Activated CD4-positive, alpha-beta T cell treated with anti-CD3 and anti-CD28 coated beads for 36 hours (primary cell): ENCODE measurements at regions of chr10 and their contacts with region 1.

Region 1: GRCh38 chr10:133373104-133373624 is at the start of gene ECHS1:
- DNase-seq: peak; percentile 97
- ATAC-seq: peak; percentile 100
- H3K4me3 Mint-ChIP-seq: peak within 1 kb of the TSS; percentile 73
- H3K27ac Mint-ChIP-seq: peak within 1 kb of the TSS; percentile 79
- H3K4me1 Mint-ChIP-seq: peaks cover 11% of the 10 kb centered on the region
- H3K27me3 Mint-ChIP-seq: no peaks in the 10 kb centered on the region
- total RNA-seq, gene ECHS1: 42.0 to 56.7 TPM

Region 2: GRCh38 chr10:133276435-133277201 is 96.5 kb before region 1 on chr10 and contains the start of gene ADAM8:
- CTCF ChIA-PET with region 1: no interaction called
- POLR2A ChIA-PET with region 1: no interaction called
- intact Hi-C with region 1: loop called in 1 of 2 experiments (anchors 1 kb)
- DNase-seq: peak; percentile 86
- ATAC-seq: peak; percentile 55
- H3K4me3 Mint-ChIP-seq: peak within 1 kb of the TSS; percentile 92
- H3K27ac Mint-ChIP-seq: peak within 1 kb of the TSS; percentile 90
- H3K4me1 Mint-ChIP-seq: peaks cover 19% of the 10 kb centered on the region
- H3K27me3 Mint-ChIP-seq: no peaks in the 10 kb centered on the region
- total RNA-seq, gene ADAM8: 124 to 176 TPM

Region 3: GRCh38 chr10:133335246-133336117 is 37.7 kb before region 1 on chr10:
- CTCF ChIA-PET with region 1: no interaction called
- POLR2A ChIA-PET with region 1: no interaction called
- intact Hi-C with region 1: no loop called
- DNase-seq: peak; percentile 86
- ATAC-seq: peak; percentile 42
- H3K4me3 Mint-ChIP-seq: peak overlapping the region; percentile 32
- H3K27ac Mint-ChIP-seq: no peak overlapping the region
- H3K4me1 Mint-ChIP-seq: peaks cover 5% of the 10 kb centered on the region
- H3K27me3 Mint-ChIP-seq: peaks cover 13% of the 10 kb centered on the region

Region 4: GRCh38 chr10:133394064-133394663 is 21.0 kb after region 1 on chr10 and contains the start of gene MTG1:
- CTCF ChIA-PET with region 1: interaction called, 4 read pairs
- POLR2A ChIA-PET with region 1: interaction called, 3 read pairs
- intact Hi-C with region 1: loop called (anchors 1 kb)
- DNase-seq: peak; percentile 97
- ATAC-seq: peak; percentile 76
- H3K4me3 Mint-ChIP-seq: peak within 1 kb of the TSS; percentile 90
- H3K27ac Mint-ChIP-seq: peak within 1 kb of the TSS; percentile 93
- H3K4me1 Mint-ChIP-seq: peaks cover 51% of the 10 kb centered on the region
- H3K27me3 Mint-ChIP-seq: no peaks in the 10 kb centered on the region
- total RNA-seq, gene MTG1: 46.9 to 52.1 TPM